SK-N-SH (cell line): ENCODE measurements at regions of chr11 and their contacts with region 1.

Region 1: GRCh38 chr11:123301696-123302400 is 106.8 kb upstream of the CLMP start:
- DNase-seq: peak; percentile 94
- H3K4me3 ChIP-seq: peak overlapping the region; percentile 3 to 29; a peak in 2 of 4 replicates
- H3K27ac ChIP-seq: 0 out of 4 replicates have a peak overlapping the region, but pooled peaks of 1 of the 2 experiments have one; percentile 5
- H3K4me1 ChIP-seq: peaks cover 17 to 19% of the 10 kb centered on the region in 2 experiments; a peak in 3 of 4 replicates
- H3K27me3 ChIP-seq: no peaks in the 10 kb centered on the region
- CTCF ChIP-seq: peak; percentile 78
- EP300 ChIP-seq: no peak
- RAD21 ChIP-seq: peak; percentile 83

Region 2: DNA sequence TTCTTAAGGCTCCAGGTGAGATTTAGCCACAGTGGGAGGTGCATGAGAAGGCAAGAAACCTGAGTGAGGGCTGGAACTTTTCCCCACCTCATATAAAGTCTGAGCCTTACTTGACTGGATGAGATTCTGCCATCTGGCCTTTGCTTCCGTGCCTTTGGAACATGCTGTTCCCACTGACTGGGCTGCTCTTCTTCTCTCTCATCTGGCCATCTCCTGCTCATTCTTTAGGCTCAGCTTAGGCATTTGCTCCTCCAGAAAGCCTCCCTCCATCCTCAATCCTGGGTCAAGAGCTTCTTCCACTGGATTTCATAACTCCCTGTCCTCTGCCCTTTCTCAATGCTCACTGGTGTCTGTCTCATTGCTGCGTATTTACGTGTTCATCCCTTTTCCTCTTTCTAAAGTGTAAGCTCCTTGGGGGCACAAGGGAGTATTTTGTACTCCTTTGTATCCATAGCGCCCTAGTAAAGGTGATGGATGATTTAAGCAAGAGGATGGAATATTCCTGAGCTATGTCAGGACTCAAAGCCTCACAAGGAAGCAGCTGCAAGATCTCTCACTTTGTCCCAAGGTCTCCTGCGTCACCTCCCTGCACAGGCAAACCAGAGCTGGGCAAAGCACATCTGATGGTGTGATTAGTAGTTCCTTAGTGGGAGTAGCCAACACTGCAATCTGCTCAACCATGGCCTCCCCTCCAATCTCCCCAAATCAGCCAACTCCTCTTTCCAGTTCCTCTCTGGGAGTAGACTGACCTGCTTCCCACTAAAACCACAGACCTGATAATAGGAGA is 255.2 kb before region 1 on chr11:
- CTCF ChIA-PET with region 1: no interaction called
- POLR2A ChIA-PET with region 1: no interaction called
- DNase-seq: no peak
- H3K4me3 ChIP-seq: no peak overlapping the region
- H3K27ac ChIP-seq: no peak overlapping the region
- H3K4me1 ChIP-seq: no peaks in the 10 kb centered on the region
- H3K27me3 ChIP-seq: no peaks in the 10 kb centered on the region
- CTCF ChIP-seq: no peak
- EP300 ChIP-seq: no peak
- RAD21 ChIP-seq: no peak

Region 3: GRCh38 chr11:123273616-123274015 is 28.2 kb before region 1 on chr11:
- CTCF ChIA-PET with region 1: no interaction called
- POLR2A ChIA-PET with region 1: no interaction called
- DNase-seq: no peak
- H3K4me3 ChIP-seq: no peak overlapping the region
- H3K27ac ChIP-seq: no peak overlapping the region
- H3K4me1 ChIP-seq: no peaks in the 10 kb centered on the region
- H3K27me3 ChIP-seq: no peaks in the 10 kb centered on the region
- CTCF ChIP-seq: no peak
- EP300 ChIP-seq: no peak
- RAD21 ChIP-seq: no peak

Region 4: DNA sequence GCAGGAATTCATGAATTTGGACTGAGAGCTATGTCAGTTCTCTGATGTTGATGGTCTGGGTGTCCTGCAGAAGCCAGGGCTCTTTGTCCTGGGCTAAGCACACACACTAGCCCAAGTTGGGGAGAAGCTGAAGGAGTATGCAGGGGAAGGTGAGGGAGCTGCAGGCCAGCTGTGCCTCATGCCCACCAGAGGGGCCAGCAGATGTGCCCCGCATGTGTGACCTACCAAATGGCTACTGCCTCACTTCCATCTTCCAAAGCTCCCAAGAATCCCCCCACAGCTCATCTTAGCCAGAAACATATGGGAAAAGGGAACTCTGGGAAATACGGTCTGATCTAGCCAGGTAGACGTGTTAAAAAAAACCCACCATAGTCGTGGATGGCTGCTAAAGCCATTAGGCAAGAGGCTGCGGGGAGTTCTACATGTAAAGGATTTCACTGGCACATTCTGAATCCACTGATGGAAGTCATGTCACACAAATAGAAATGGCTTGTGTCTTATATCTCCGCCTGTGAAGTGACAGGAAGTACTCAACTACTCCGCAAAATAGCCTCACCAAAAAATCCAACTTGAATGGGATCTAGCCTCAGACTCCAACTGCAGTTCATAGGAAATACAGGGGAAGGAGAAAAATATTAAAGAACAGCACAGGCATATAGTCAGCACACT is 10.5 kb before region 1 on chr11:
- CTCF ChIA-PET with region 1: interaction called, 11 read pairs
- POLR2A ChIA-PET with region 1: no interaction called
- DNase-seq: no peak
- H3K4me3 ChIP-seq: no peak overlapping the region
- H3K27ac ChIP-seq: no peak overlapping the region
- H3K4me1 ChIP-seq: no peaks in the 10 kb centered on the region
- H3K27me3 ChIP-seq: no peaks in the 10 kb centered on the region
- CTCF ChIP-seq: no peak
- EP300 ChIP-seq: no peak
- RAD21 ChIP-seq: no peak

Region 5: GRCh38 chr11:123316003-123316402 is 14.2 kb after region 1 on chr11:
- CTCF ChIA-PET with region 1: interaction called, 14 read pairs
- POLR2A ChIA-PET with region 1: no interaction called
- DNase-seq: no peak
- H3K4me3 ChIP-seq: no peak overlapping the region
- H3K27ac ChIP-seq: no peak overlapping the region
- H3K4me1 ChIP-seq: peaks cover 0 to 2% of the 10 kb centered on the region in 2 experiments; a peak in 2 of 4 replicates
- H3K27me3 ChIP-seq: no peaks in the 10 kb centered on the region; the same call in 1 of the 2 replicates
- CTCF ChIP-seq: no peak
- EP300 ChIP-seq: no peak
- RAD21 ChIP-seq: no peak

Region 6: DNA sequence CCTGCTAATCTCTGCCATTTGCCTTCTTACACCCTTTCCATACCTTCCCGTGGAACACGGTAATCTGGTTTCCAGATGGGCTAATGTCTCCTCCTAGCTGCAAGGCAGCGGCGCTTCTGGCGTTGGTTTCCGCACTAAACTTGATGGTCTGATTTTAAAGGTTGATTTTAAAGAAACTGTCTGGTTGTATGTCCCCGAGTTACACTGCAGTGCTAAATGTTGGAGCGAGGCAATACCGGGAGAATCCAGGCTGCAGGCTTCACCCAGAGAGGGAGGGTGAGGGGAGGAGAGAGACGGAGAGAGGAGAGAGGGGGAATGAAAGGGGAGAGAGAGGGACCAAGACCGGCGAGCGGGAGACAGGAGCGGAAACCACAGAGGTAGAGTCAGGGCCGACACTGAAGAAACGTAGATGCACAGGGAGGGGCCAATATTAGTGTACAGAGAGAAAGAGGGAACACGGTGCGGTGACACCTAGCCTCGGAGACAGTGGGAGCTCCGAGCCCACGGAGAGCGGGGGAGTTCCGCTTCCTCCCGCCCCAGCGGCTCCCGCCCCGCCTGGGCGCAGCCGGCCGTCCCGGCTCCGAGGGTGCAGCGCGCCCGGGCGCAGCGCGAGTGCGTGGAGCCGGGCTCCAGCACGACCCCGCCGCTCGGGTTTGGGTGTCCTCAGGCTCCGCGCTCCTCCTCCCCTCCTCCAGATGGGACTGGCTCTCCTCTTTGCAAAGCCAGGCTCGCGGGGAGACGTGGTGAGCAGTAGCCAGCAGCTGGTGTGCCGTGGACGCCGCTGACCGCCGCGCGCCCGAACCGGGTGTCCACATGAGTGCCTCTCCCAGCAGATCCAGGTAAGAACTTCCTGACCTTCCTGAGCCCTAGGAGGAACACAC is 56.4 kb after region 1 on chr11:
- CTCF ChIA-PET with region 1: interaction called, 50 read pairs
- POLR2A ChIA-PET with region 1: no interaction called
- DNase-seq: peak; percentile 82
- H3K4me3 ChIP-seq: peak overlapping the region; percentile 53 to 71
- H3K27ac ChIP-seq: peak overlapping the region in 1 of 2 experiments; percentile 48; a peak in 2 of 4 replicates
- H3K4me1 ChIP-seq: peaks cover 0 to 16% of the 10 kb centered on the region in 2 experiments; a peak in 1 of 4 replicates
- H3K27me3 ChIP-seq: peaks cover 45% of the 10 kb centered on the region; the same call in 1 of the 2 replicates
- CTCF ChIP-seq: peak; percentile 27
- EP300 ChIP-seq: no peak
- RAD21 ChIP-seq: peak; percentile 64